Ovary (tissue), 10 donors: ENCODE measurements at regions of chr21 and their contacts with region 1.

Region 1: DNA sequence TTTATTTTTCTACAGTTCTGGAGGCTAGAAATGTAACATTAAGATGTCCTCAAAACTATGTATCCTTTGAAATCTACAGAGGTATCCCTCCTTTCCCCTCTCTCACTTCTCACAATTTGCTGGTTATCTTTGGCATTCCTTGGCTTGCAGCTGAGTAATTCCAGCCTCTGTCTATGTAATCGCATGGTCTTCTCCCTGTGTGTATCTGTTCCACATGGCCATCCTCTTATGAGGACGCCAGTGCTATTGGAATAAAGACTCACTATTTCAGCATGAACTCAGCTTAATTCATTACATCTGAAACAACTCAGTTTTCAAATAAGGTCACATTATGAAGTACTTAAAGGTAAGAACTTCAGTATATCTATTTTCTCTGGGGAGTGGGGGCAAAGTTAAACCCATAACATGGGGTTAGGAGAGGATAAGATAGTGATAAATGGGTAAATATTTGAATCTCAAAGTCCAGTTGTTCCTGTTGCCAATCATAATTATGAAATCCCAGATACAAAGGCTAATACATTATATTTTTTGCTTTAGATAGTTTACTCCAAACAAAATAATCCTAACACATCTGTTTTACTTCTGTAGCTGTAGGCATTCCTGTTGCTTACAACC is 1290.8 kb downstream of the NCAM2 start:
- DNase-seq: no peak
- H3K4me3 ChIP-seq: no peak overlapping the region
- H3K27ac ChIP-seq: no peak overlapping the region
- H3K4me1 ChIP-seq: no peaks in the 10 kb centered on the region
- H3K27me3 ChIP-seq: no peaks in the 10 kb centered on the region
- CTCF ChIP-seq: no peak
- EP300 ChIP-seq: no peak
- POLR2A ChIP-seq: no peak

Region 2: GRCh38 chr21:20486303-20486702 is 1802.7 kb before region 1 on chr21:
- intact Hi-C with region 1: loop called in 1 of 4 experiments (anchors 5 kb)
- DNase-seq: no peak
- H3K4me3 ChIP-seq: no peak overlapping the region
- H3K27ac ChIP-seq: no peak overlapping the region
- H3K4me1 ChIP-seq: no peaks in the 10 kb centered on the region
- H3K27me3 ChIP-seq: no peaks in the 10 kb centered on the region
- CTCF ChIP-seq: no peak
- EP300 ChIP-seq: no peak
- POLR2A ChIP-seq: no peak

Region 3: GRCh38 chr21:22223385-22223784 is 65.6 kb before region 1 on chr21:
- intact Hi-C with region 1: no loop called
- DNase-seq: no peak
- H3K4me3 ChIP-seq: no peak overlapping the region
- H3K27ac ChIP-seq: no peak overlapping the region
- H3K4me1 ChIP-seq: no peaks in the 10 kb centered on the region
- H3K27me3 ChIP-seq: no peaks in the 10 kb centered on the region
- CTCF ChIP-seq: no peak
- EP300 ChIP-seq: no peak
- POLR2A ChIP-seq: no peak